ENCODE measurements at regions of chr3 and their contacts with region 1.

Region 1: GRCh38 chr3:50121416-50122032 is 32.8 kb downstream of the RBM5 start:
- DNase-seq: peak; percentile 21
- H3K4me3 ChIP-seq: no peak overlapping the region
- CTCF ChIP-seq: peak; percentile 79

Region 2: GRCh38 chr3:50057756-50058155 is 63.8 kb before region 1 on chr3:
- CTCF ChIA-PET with region 1: no interaction called
- POLR2A ChIA-PET with region 1: no interaction called
- DNase-seq: no peak
- H3K4me3 ChIP-seq: no peak overlapping the region
- CTCF ChIP-seq: no peak

Region 3: DNA sequence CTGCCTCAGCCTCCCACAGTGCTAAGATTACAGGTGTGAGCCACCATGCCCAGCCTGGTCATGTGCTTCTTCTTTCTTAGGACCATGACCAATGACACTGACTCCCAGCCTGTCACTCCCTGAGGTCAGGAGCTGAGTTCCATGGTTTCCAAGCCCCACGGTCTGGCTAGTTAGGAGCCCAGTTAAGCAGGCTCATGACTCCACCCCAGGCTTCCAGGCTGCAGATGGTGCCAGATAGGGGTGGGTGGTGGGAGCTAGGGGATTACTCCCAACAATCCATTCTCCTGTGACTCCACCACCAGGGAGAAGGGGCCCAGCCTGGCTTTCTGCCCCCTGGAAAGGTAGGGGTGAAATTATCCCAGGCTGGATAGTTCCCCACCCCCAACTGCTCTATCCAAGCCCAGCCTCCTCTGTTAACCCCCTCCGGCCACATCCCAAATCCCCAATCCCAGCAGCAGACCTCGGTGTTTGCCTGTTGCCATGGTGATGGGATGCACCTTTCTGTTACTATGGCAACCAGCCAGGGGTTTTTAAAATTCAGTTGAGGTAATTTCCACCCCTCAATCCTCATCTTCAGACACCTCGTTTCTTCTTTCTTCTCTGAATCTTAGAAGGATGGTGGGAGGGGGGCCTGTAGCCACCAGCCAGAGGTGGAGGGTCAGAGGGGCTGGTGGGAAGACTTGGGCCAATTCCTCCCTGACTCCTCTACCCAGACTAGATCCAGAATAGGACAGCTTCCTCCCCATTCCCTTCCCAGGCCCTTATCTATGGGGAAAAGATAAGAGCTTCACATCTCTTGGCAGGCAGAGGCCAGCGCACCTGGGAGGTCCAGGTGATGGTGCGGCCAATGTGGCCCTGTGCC is 11.1 kb after region 1 on chr3:
- CTCF ChIA-PET with region 1: interaction called, 76 read pairs
- POLR2A ChIA-PET with region 1: interaction called, 4 read pairs
- DNase-seq: no peak
- H3K4me3 ChIP-seq: no peak overlapping the region
- CTCF ChIP-seq: no peak

Region 4: GRCh38 chr3:50163572-50164455 is 42.3 kb after region 1 on chr3:
- CTCF ChIA-PET with region 1: interaction called, 17 read pairs
- POLR2A ChIA-PET with region 1: interaction called, 3 read pairs
- DNase-seq: peak; percentile 65
- H3K4me3 ChIP-seq: no peak overlapping the region
- CTCF ChIP-seq: no peak

Region 5: GRCh38 chr3:50211930-50212329 is 90.4 kb after region 1 on chr3:
- CTCF ChIA-PET with region 1: interaction called, 10 read pairs
- POLR2A ChIA-PET with region 1: no interaction called
- DNase-seq: no peak
- H3K4me3 ChIP-seq: no peak overlapping the region
- CTCF ChIP-seq: no peak

Region 6: DNA sequence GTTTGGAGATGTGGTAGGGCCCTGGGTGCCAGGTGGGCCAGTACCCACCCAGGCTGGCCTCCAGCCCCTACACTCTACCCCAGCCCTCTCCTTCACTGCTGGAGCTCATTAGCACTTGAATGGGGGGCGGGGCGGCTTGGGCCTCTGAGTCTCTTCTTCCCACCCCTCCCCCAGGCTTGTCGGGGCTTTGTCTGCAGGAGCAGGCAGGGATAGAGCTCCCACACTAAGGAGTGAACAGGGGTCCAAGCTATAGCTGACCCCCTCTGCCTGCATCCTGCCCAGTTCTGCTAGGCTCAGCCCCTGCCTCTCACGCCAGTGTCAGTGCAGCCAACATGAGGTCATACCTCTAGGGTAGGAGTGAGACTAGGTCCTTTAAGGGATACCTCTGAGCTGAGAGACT is 119.6 kb after region 1 on chr3:
- CTCF ChIA-PET with region 1: no interaction called
- POLR2A ChIA-PET with region 1: no interaction called
- DNase-seq: no peak
- H3K4me3 ChIP-seq: no peak overlapping the region
- CTCF ChIP-seq: no peak

Measured in AG04449 (cell line).